Kidney (tissue), 22 donors: ENCODE measurements at regions of chr2 and their contacts with region 1.

Region 1: DNA sequence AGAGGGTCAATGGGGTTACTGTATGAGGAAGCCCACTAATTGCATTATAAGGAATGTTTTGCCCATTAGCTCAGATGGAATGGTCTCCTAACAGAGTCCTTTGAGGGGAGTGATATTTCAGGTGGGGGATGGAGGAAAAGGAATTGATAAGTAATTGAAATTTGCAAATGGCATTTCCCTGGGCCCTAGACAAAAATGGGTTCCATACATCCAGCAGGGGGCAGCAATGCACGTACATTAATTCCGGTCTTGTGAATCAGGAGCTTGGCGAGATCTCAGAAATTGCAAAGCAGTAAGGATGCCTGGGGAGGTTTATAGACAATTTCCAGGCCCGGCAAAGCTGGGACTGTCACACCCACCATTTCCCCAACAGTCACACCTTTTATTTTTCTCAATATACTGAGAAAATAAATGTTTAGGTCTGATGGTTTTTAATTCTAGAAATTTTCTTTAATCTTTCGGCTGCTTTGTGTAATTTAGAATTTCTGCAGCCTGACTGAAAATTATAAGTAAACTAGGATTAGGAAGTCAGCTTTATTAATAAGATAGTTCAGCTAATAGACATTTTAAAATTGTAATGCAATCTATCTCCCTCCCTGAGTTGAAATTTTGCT is 122.8 kb downstream of the LYPD1 start:
- DNase-seq: peak in 4 of 5 donors; percentile 74 to 92 (median 84)
- H3K4me3 ChIP-seq: no peak overlapping the region
- H3K27ac ChIP-seq: no peak overlapping the region
- H3K4me1 ChIP-seq: no peaks in the 10 kb centered on the region
- H3K27me3 ChIP-seq: no peaks in the 10 kb centered on the region
- CTCF ChIP-seq: peak; percentile 61

Region 2: GRCh38 chr2:131966256-131966655 is 580.9 kb before region 1 on chr2:
- intact Hi-C with region 1: no loop called
- DNase-seq: peak in 1 of 5 donors; percentile 67
- H3K4me3 ChIP-seq: no peak overlapping the region
- H3K27ac ChIP-seq: no peak overlapping the region
- H3K4me1 ChIP-seq: no peaks in the 10 kb centered on the region
- H3K27me3 ChIP-seq: no peaks in the 10 kb centered on the region
- CTCF ChIP-seq: no peak

Region 3: GRCh38 chr2:133171393-133172004 is 624.3 kb after region 1 on chr2:
- intact Hi-C with region 1: loop called (anchors 10 kb)
- DNase-seq: peak in 4 of 5 donors; percentile 14 to 91 (median 60)
- H3K4me3 ChIP-seq: no peak overlapping the region
- H3K27ac ChIP-seq: no peak overlapping the region
- H3K4me1 ChIP-seq: no peaks in the 10 kb centered on the region
- H3K27me3 ChIP-seq: no peaks in the 10 kb centered on the region
- CTCF ChIP-seq: peak; percentile 57